K562 (cell line): ENCODE measurements at regions of chr4 and their contacts with region 1.

Region 1: DNA sequence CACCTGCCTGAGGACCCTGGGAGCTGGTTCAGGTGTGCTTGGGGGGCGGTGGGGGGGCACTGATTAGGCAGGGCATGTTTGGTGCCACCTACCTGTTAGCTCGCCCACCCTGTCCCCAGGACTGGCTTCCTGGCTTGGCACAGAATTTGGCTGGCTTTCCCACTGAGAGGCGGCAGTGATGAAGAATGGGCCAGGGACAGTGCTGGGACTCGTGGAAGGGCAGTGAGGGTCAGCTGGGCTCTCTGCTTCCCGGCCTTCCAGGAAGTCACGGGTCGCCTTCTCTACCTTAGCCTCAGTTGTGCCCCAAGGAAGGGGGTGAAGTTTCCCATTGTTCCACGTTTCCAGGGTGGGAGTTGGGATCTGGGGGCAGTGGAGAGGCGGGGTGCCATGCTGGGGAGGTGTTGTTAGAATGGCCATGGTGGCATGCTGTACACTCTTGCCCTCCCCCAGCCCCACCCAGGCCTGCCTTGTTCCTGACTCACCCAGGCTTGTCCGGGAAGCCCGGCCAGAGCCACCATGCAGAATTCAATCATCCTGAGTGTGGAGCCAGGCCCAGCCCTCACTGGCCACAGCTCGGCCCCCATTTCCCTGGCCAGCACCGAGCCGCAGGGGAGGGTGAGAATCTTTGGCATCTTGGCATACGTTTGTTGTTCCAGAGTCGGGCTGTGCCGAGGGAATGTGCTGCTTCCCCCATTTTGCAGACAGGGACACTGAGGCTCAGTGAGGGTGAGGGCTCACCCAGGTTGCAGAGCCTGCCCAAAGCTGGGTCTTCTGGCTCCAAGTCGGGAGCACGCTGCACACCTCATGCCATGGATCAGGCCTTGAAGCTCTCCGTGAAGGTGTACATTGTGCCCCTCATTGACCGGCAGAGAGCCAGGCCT is 21.9 kb upstream of the GPR78 start:
- DNase-seq: no peak
- ATAC-seq: no peak
- H3K4me3 ChIP-seq: no peak overlapping the region
- H3K27ac ChIP-seq: no peak overlapping the region
- H3K4me1 ChIP-seq: peaks cover 0 to 5% of the 10 kb centered on the region in 2 experiments; a peak in 1 of 5 replicates
- H3K27me3 ChIP-seq: peaks cover 0 to 27% of the 10 kb centered on the region in 2 experiments; a peak in 3 of 5 replicates
- CTCF ChIP-seq: no peak
- EP300 ChIP-seq: no peak
- POLR2A ChIP-seq: no peak
- RAD21 ChIP-seq: no peak

Region 2: GRCh38 chr4:8478801-8479744 is 79.2 kb before region 1 on chr4:
- CTCF ChIA-PET with region 1: no interaction called
- POLR2A ChIA-PET with region 1: no interaction called
- in situ Hi-C with region 1: loop called (anchors 5 kb)
- intact Hi-C with region 1: no loop called
- DNase-seq: peak in 3 of 4 experiments; percentile 29 to 66 (median 64)
- ATAC-seq: peak; percentile 91
- H3K4me3 ChIP-seq: no peak overlapping the region
- H3K27ac ChIP-seq: peak overlapping the region; percentile 73; the same call in 2 of the 3 replicates
- H3K4me1 ChIP-seq: peaks cover 26 to 29% of the 10 kb centered on the region in 2 experiments
- H3K27me3 ChIP-seq: no peaks in the 10 kb centered on the region
- CTCF ChIP-seq: no peak
- EP300 ChIP-seq: peak; percentile 96
- POLR2A ChIP-seq: no peak
- RAD21 ChIP-seq: peak in 1 of 2 experiments; percentile 31; a peak in 2 of 4 replicates

Region 3: DNA sequence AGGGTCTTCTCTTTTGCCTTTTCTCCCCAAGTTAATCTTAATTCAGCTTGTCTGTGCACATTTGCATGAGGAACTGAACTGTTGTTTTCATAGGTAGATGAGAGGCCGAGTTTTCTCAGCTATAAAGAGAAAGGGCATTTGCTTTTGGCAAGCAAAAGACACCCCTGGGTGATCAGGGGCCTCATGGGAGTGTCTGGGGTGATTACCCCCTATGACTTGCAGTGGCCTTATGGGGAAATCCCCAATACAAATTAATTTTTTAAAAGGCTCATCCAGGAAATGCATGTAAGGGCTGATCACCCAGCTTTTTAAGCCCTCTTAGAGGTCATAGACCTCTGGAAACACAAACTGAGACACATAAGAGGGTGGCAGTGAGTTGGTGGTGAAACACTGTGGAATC is 369.8 kb after region 1 on chr4:
- CTCF ChIA-PET with region 1: no interaction called
- POLR2A ChIA-PET with region 1: no interaction called
- in situ Hi-C with region 1: no loop called
- intact Hi-C with region 1: no loop called
- DNase-seq: peak in 1 of 4 experiments; percentile 1
- ATAC-seq: no peak
- H3K4me3 ChIP-seq: no peak overlapping the region
- H3K27ac ChIP-seq: no peak overlapping the region
- H3K4me1 ChIP-seq: no peaks in the 10 kb centered on the region
- H3K27me3 ChIP-seq: no peaks in the 10 kb centered on the region
- CTCF ChIP-seq: no peak
- EP300 ChIP-seq: no peak
- POLR2A ChIP-seq: no peak
- RAD21 ChIP-seq: no peak